T-cell (primary cell): ENCODE measurements at regions of chr1 and their contacts with region 1.

Region 1: GRCh38 chr1:76330991-76331603 is 256.6 kb downstream of the ST6GALNAC3 start:
- DNase-seq: peak in 19 of 35 experiments; percentile 2 to 59 (median 14)
- ATAC-seq: peak in 2 of 4 experiments; percentile 57 to 63
- H3K4me3 ChIP-seq: no peak overlapping the region
- H3K4me3 Mint-ChIP-seq: no peak overlapping the region
- H3K27ac ChIP-seq: no peak overlapping the region
- H3K27ac Mint-ChIP-seq: no peak overlapping the region
- H3K4me1 ChIP-seq: peaks cover 0 to 5% of the 10 kb centered on the region in 2 experiments
- H3K4me1 Mint-ChIP-seq: peaks cover 6 to 20% (median 8%) of the 10 kb centered on the region in 3 donors
- H3K27me3 ChIP-seq: no peaks in the 10 kb centered on the region
- H3K27me3 Mint-ChIP-seq: peaks cover 0 to 2% of the 10 kb centered on the region in 2 donors

Region 2: DNA sequence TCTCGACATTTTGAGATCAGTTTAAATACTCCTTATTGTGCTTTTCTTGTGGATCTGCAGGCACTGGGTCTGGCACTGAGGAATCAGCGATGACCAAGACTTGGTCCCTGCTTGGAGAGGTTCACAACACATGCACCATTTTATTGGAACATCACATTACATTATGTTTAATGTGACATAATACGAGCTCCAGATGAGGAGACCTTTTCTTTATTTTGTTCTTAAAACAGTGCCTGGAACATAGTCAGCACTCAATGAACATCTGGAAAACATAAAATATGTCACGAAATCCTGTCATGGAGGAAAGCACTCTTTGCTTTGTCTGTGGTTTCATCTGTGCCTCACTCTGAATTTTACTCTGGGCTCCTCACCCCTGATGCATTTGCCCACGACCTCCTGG is 145.9 kb before region 1 on chr1:
- CTCF ChIA-PET with region 1: no interaction called
- POLR2A ChIA-PET with region 1: interaction called in 1 of 2 experiments, 11 read pairs
- DNase-seq: no peak
- ATAC-seq: no peak
- H3K4me3 ChIP-seq: no peak overlapping the region
- H3K4me3 Mint-ChIP-seq: no peak overlapping the region
- H3K27ac ChIP-seq: no peak overlapping the region
- H3K27ac Mint-ChIP-seq: no peak overlapping the region
- H3K4me1 ChIP-seq: no peaks in the 10 kb centered on the region
- H3K4me1 Mint-ChIP-seq: peaks cover 0 to 5% (median 0%) of the 10 kb centered on the region in 3 donors
- H3K27me3 ChIP-seq: no peaks in the 10 kb centered on the region
- H3K27me3 Mint-ChIP-seq: peaks cover 0 to 2% of the 10 kb centered on the region in 2 donors

Region 3: GRCh38 chr1:76317299-76317900 is 13.7 kb before region 1 on chr1:
- CTCF ChIA-PET with region 1: interaction called in 1 of 2 experiments, 4 read pairs
- POLR2A ChIA-PET with region 1: interaction called in 1 of 2 experiments, 11 read pairs
- DNase-seq: no peak
- ATAC-seq: no peak
- H3K4me3 ChIP-seq: no peak overlapping the region
- H3K4me3 Mint-ChIP-seq: no peak overlapping the region
- H3K27ac ChIP-seq: no peak overlapping the region
- H3K27ac Mint-ChIP-seq: no peak overlapping the region
- H3K4me1 ChIP-seq: no peaks in the 10 kb centered on the region
- H3K4me1 Mint-ChIP-seq: no peaks in the 10 kb centered on the region
- H3K27me3 ChIP-seq: no peaks in the 10 kb centered on the region
- H3K27me3 Mint-ChIP-seq: no peaks in the 10 kb centered on the region

Region 4: DNA sequence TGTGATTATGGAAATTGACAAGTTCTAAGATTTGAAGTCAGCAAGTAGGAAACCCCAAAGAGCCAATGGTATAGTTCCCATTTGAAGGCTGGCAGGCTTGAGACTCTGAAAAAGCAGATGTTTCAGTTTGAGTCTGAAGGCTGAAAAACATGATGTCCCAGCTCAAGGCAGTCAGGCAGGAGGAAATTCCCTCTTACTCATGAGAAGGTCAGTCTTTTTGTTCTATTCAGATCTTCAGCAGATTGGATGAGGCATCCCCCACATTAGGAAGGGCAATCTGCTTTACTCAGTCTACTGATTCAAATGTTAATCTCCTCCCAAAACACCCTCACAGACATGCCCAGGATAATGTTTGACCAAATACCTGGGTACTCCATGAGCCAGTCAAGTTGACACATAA is 163.7 kb after region 1 on chr1:
- CTCF ChIA-PET with region 1: no interaction called
- POLR2A ChIA-PET with region 1: no interaction called
- DNase-seq: no peak
- ATAC-seq: no peak
- H3K4me3 ChIP-seq: no peak overlapping the region
- H3K4me3 Mint-ChIP-seq: no peak overlapping the region
- H3K27ac ChIP-seq: no peak overlapping the region
- H3K27ac Mint-ChIP-seq: no peak overlapping the region
- H3K4me1 ChIP-seq: peaks cover 0 to 4% of the 10 kb centered on the region in 2 experiments
- H3K4me1 Mint-ChIP-seq: peaks cover 3 to 6% (median 5%) of the 10 kb centered on the region in 3 donors
- H3K27me3 ChIP-seq: no peaks in the 10 kb centered on the region
- H3K27me3 Mint-ChIP-seq: no peaks in the 10 kb centered on the region